Activated CD4-positive, alpha-beta T cell treated with anti-CD3 and anti-CD28 coated beads for 36 hours (primary cell): ENCODE measurements at regions of chrX and their contacts with region 1.

Region 1: GRCh38 chrX:132292793-132293192 is 73.5 kb upstream of the RAP2C start:
- DNase-seq: peak; percentile 28
- ATAC-seq: peak; percentile 39
- H3K4me3 Mint-ChIP-seq: no peak overlapping the region
- H3K27ac Mint-ChIP-seq: no peak overlapping the region
- H3K4me1 Mint-ChIP-seq: no peaks in the 10 kb centered on the region
- H3K27me3 Mint-ChIP-seq: no peaks in the 10 kb centered on the region

Region 2: DNA sequence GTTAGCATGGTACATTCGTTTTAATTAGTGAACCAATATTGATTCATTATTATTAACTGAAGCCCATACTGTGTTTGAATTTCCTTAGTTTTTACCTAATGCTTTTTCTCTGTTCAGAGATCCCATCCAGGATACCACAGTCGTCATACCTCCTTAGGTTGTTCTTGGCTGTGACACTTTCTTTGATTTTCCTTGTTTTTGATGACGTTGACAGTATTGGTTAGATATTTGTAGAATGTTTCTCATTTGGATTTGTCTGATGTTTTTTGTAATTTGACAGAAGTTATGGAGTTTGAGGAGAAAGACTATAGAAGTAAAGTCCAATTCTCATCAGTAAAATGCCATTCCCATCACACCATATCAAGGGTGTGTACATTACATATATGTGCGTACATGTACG is 57.3 kb before region 1 on chrX:
- CTCF ChIA-PET with region 1: no interaction called
- POLR2A ChIA-PET with region 1: no interaction called
- intact Hi-C with region 1: no loop called
- DNase-seq: no peak
- ATAC-seq: no peak
- H3K4me3 Mint-ChIP-seq: no peak overlapping the region
- H3K27ac Mint-ChIP-seq: no peak overlapping the region
- H3K4me1 Mint-ChIP-seq: peaks cover 9% of the 10 kb centered on the region
- H3K27me3 Mint-ChIP-seq: no peaks in the 10 kb centered on the region

Region 3: GRCh38 chrX:132304599-132304998 is 11.8 kb after region 1 on chrX:
- CTCF ChIA-PET with region 1: interaction called, 12 read pairs
- POLR2A ChIA-PET with region 1: no interaction called
- intact Hi-C with region 1: no loop called
- DNase-seq: no peak
- ATAC-seq: no peak
- H3K4me3 Mint-ChIP-seq: no peak overlapping the region
- H3K27ac Mint-ChIP-seq: no peak overlapping the region
- H3K4me1 Mint-ChIP-seq: no peaks in the 10 kb centered on the region
- H3K27me3 Mint-ChIP-seq: no peaks in the 10 kb centered on the region

Region 4: GRCh38 chrX:132463411-132463810 is 170.6 kb after region 1 on chrX:
- CTCF ChIA-PET with region 1: interaction called, 6 read pairs
- POLR2A ChIA-PET with region 1: no interaction called
- intact Hi-C with region 1: loop called (anchors 2 to 5 kb)
- DNase-seq: peak; percentile 43
- ATAC-seq: no peak
- H3K4me3 Mint-ChIP-seq: no peak overlapping the region
- H3K27ac Mint-ChIP-seq: no peak overlapping the region
- H3K4me1 Mint-ChIP-seq: no peaks in the 10 kb centered on the region
- H3K27me3 Mint-ChIP-seq: no peaks in the 10 kb centered on the region

Region 5: GRCh38 chrX:132592880-132593279 is 300.1 kb after region 1 on chrX:
- CTCF ChIA-PET with region 1: no interaction called
- POLR2A ChIA-PET with region 1: no interaction called
- intact Hi-C with region 1: loop called in 1 of 2 experiments (anchors 5 kb)
- DNase-seq: peak; percentile 10
- ATAC-seq: no peak
- H3K4me3 Mint-ChIP-seq: no peak overlapping the region
- H3K27ac Mint-ChIP-seq: no peak overlapping the region
- H3K4me1 Mint-ChIP-seq: no peaks in the 10 kb centered on the region
- H3K27me3 Mint-ChIP-seq: no peaks in the 10 kb centered on the region